AG04449 (cell line): ENCODE measurements at regions of chr19 and their contacts with region 1.

Region 1: DNA sequence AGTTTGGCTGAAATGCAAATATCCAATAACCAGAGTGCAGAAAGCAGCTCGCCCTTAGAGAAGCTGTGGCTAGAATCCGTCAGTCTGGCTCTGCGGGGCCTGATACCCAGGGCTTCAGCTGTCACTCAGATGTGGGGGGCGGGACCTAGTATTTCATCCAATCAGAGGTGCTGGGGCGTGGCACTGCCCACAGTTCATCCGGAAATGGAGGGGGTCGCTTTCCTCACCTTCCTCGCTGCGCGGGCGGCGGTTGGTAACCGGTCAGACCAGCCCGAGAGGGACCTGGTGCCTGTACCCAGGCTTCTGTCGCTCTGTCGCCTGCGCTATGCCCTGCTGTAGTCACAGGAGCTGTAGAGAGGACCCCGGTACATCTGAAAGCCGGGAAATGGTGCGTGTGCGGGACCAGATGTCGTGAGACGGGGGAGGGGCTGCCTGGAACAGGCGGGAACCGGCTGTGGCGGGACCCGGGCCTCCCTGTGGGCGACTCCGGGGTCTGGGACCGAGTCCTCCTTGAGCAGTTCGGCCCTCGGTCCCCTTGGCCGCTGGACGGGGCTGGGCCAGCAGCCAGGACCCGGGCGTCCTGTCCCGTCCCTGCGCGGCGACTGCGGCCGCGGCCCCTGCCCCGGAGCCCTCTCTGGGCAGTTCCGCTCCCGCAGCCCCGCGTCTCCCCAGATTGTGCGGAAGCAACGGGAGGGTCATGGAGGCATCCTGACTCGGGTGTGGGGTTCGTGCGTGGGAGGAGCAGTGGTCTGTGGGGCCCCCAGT is at the start of gene ZNF700:
- DNase-seq: no peak
- H3K4me3 ChIP-seq: peak within 1 kb of the TSS; percentile 95
- CTCF ChIP-seq: no peak

Region 2: GRCh38 chr19:11766597-11767591 is 158.2 kb before region 1 on chr19 and contains the start of gene ZNF441:
- CTCF ChIA-PET with region 1: no interaction called
- POLR2A ChIA-PET with region 1: no interaction called
- DNase-seq: peak; percentile 42
- H3K4me3 ChIP-seq: peak within 1 kb of the TSS; percentile 95
- CTCF ChIP-seq: no peak

Region 3: GRCh38 chr19:11881151-11881800 is 43.8 kb before region 1 on chr19:
- CTCF ChIA-PET with region 1: interaction called, 12 read pairs
- POLR2A ChIA-PET with region 1: no interaction called
- DNase-seq: no peak
- H3K4me3 ChIP-seq: peak overlapping the region; percentile 15; the same call in 1 of the 2 replicates
- CTCF ChIP-seq: peak; percentile 72

Region 4: GRCh38 chr19:11913680-11914079 is 11.4 kb before region 1 on chr19:
- CTCF ChIA-PET with region 1: interaction called, 15 read pairs
- POLR2A ChIA-PET with region 1: no interaction called
- DNase-seq: no peak
- H3K4me3 ChIP-seq: no peak overlapping the region
- CTCF ChIP-seq: no peak

Region 5: GRCh38 chr19:11949201-11949600 is 24.1 kb after region 1 on chr19:
- CTCF ChIA-PET with region 1: interaction called, 31 read pairs
- POLR2A ChIA-PET with region 1: no interaction called
- DNase-seq: no peak
- H3K4me3 ChIP-seq: no peak overlapping the region
- CTCF ChIP-seq: no peak

Region 6: DNA sequence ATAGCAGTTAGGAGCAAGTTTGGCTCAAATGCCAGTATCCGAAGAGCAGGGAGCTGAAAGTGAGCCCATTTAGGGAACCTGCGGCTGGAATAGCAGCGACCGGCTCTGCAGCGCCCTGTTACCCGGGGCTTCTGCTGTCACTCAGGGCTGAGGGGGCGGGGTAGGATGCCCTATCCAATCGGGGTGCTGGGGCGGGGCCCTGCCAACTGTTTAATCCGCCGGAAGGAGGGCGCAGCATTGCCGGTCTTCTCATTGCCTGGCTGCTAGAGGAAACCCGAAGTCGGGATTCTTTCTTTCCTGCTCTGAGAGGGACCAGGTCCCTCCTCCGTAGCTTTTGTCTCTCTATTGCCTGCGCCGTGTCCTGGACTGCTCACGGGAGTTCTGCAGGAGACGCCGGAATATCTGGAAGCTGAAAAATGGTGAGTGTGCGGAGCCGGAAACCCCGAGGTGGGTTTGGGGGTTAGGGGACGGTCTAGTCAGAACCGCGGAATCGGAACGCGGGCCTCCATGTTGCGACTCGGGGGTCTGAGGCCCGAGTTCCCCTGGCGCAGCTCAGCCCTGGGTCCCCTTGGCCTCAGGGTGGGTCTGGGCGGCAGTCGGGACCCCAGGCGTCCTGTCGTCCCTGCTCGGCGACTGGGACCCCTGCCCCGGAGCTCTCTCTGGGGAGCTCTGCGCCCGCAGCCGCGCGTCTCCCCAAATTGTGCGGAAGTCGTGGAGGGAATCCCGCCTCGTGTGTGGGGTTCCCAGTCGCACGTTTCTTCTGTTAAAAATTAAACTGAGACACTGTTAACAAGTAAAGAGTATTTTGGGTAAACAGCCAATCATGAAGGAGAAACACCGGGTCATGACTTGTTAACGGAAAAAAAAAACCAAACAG is 62.6 kb after region 1 on chr19:
- CTCF ChIA-PET with region 1: interaction called, 100 read pairs
- POLR2A ChIA-PET with region 1: interaction called, 9 read pairs
- DNase-seq: no peak
- H3K4me3 ChIP-seq: peak overlapping the region; percentile 92
- CTCF ChIP-seq: no peak

Region 7: GRCh38 chr19:12139885-12140547 is 214.9 kb after region 1 on chr19 and contains the start of gene ZNF20:
- CTCF ChIA-PET with region 1: interaction called, 21 read pairs
- POLR2A ChIA-PET with region 1: no interaction called
- DNase-seq: peak; percentile 44
- H3K4me3 ChIP-seq: peak within 1 kb of the TSS; percentile 86
- CTCF ChIP-seq: no peak